Activated CD4-positive, alpha-beta memory T cell treated with anti-CD3 and anti-CD28 coated beads, Interleukin-2, amount 10 ng/mL, durations not matched to agents 7 days and 5 days (primary cell): ENCODE measurements at regions of chr22 and their contacts with region 1.

Region 1: DNA sequence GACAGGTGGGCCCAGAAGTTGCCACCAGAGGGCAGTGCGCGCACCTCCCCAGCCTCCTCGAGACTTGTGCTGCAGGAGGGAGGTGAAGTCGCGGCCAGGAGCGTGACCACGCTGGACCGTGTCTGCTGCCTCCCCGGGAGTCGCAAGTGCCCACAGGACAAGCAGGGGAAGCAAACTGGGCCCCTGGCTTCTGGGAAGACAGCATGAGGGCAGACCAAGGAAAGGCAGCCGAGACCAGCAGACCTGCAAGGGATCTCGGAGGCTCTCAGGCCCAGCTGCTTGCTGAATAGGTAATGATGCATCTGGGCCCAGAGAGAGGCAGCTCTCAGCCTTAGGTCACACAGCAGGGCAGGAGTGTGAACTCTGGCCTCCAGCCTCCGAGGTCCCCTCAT is 17.0 kb upstream of the IL2RB start:
- DNase-seq: peak; percentile 87
- H3K4me3 Mint-ChIP-seq: peak overlapping the region; percentile 71
- H3K27ac Mint-ChIP-seq: peak overlapping the region; percentile 94
- H3K4me1 Mint-ChIP-seq: peaks cover 85% of the 10 kb centered on the region
- H3K27me3 Mint-ChIP-seq: no peaks in the 10 kb centered on the region

Region 2: DNA sequence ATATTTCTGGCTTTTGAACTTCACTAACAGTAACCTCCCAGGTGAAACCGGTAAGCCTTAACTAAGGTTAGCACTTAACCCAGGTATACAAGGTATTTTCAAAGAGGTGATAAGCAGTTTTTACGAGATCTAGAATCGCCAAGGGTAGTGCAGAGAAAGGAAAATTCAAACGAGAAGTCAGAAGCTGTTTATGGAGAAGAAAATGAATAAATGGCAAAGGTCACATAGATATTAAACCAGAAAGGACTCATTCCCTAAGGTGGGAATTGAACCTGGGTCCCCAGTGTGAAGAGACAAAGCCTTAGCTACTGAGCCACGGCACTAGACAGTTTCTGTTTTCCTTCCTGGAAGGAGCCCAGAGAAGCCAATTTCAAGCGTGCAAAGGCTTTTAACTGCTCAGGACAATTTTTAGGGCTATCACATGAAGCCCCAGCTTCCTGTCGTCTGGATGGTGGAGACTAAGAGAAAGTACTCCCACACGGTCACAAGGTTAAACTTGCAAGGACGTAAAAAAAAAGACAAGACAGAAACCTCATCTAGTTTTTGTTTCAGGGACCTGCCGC is 27.0 kb after region 1 on chr22:
- CTCF ChIA-PET with region 1: interaction called, 60 read pairs
- POLR2A ChIA-PET with region 1: interaction called, 40 read pairs
- DNase-seq: peak; percentile 44
- H3K4me3 Mint-ChIP-seq: no peak overlapping the region
- H3K27ac Mint-ChIP-seq: peak overlapping the region; percentile 64
- H3K4me1 Mint-ChIP-seq: peaks cover 46% of the 10 kb centered on the region
- H3K27me3 Mint-ChIP-seq: no peaks in the 10 kb centered on the region